CD8-positive, alpha-beta T cell (primary cell): ENCODE measurements at regions of chr1 and their contacts with region 1.

Region 1: GRCh38 chr1:165597883-165598675 is 33.0 kb upstream of the MGST3 start:
- DNase-seq: peak; percentile 77 to 95 (median 89)
- ATAC-seq: peak; percentile 94
- H3K4me3 ChIP-seq: peak overlapping the region; percentile 60 to 63
- H3K4me3 Mint-ChIP-seq: peak overlapping the region; percentile 89
- H3K27ac ChIP-seq: peak overlapping the region; percentile 24 to 49
- H3K27ac Mint-ChIP-seq: peak overlapping the region; percentile 50
- H3K4me1 ChIP-seq: peaks cover 12% of the 10 kb centered on the region
- H3K4me1 Mint-ChIP-seq: peaks cover 19% of the 10 kb centered on the region
- H3K27me3 ChIP-seq: peaks cover 0 to 3% of the 10 kb centered on the region in 2 experiments
- H3K27me3 Mint-ChIP-seq: peaks cover 31% of the 10 kb centered on the region
- CTCF ChIP-seq: no peak

Region 2: DNA sequence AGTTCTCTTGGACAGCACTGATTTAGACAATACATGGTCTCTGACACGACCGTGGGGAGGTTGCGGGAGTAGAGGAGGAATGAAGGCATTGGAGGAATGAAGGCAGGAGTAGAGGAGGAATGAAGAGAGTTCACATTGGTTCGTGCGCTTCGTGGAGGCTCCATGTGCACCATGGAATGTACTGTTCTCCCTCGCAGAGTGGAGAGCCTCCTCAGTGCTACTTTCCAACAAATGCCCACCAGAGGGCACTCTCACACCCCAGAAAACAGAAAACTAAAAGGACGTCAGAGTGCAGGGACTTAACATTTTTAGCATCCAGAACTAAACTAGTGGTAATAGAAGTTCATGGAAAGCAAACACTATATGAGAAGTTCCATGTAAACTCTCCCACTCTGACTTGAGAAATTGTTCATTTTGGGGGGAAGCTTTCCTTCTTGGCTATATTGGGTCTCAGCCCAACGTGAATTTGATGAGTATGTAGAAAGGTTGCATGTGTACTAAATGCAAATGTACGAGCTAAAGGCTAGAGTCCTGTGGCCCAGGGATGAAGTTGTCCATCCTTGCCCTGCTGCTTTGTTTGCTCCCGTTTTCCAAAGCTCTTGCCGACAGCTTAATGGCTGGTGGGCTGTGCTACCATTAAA is 453.2 kb before region 1 on chr1:
- CTCF ChIA-PET with region 1: no interaction called
- POLR2A ChIA-PET with region 1: no interaction called
- intact Hi-C with region 1: loop called in 1 of 2 experiments (anchors 2 kb)
- DNase-seq: peak in 4 of 9 experiments; percentile 5 to 17 (median 9)
- ATAC-seq: no peak
- H3K4me3 ChIP-seq: no peak overlapping the region
- H3K4me3 Mint-ChIP-seq: no peak overlapping the region
- H3K27ac ChIP-seq: no peak overlapping the region
- H3K27ac Mint-ChIP-seq: no peak overlapping the region
- H3K4me1 ChIP-seq: no peaks in the 10 kb centered on the region
- H3K4me1 Mint-ChIP-seq: peaks cover 3% of the 10 kb centered on the region
- H3K27me3 ChIP-seq: no peaks in the 10 kb centered on the region
- H3K27me3 Mint-ChIP-seq: peaks cover 5% of the 10 kb centered on the region
- CTCF ChIP-seq: peak; percentile 12

Region 3: GRCh38 chr1:165383067-165383466 is 215.0 kb before region 1 on chr1:
- CTCF ChIA-PET with region 1: interaction called, 25 read pairs
- POLR2A ChIA-PET with region 1: no interaction called
- intact Hi-C with region 1: no loop called
- DNase-seq: no peak
- ATAC-seq: no peak
- H3K4me3 ChIP-seq: no peak overlapping the region
- H3K4me3 Mint-ChIP-seq: no peak overlapping the region
- H3K27ac ChIP-seq: no peak overlapping the region
- H3K27ac Mint-ChIP-seq: no peak overlapping the region
- H3K4me1 ChIP-seq: no peaks in the 10 kb centered on the region
- H3K4me1 Mint-ChIP-seq: no peaks in the 10 kb centered on the region
- H3K27me3 ChIP-seq: no peaks in the 10 kb centered on the region
- H3K27me3 Mint-ChIP-seq: peaks cover 55% of the 10 kb centered on the region
- CTCF ChIP-seq: no peak

Region 4: GRCh38 chr1:165551469-165551868 is 46.6 kb before region 1 on chr1:
- CTCF ChIA-PET with region 1: no interaction called
- POLR2A ChIA-PET with region 1: no interaction called
- intact Hi-C with region 1: no loop called
- DNase-seq: no peak
- ATAC-seq: no peak
- H3K4me3 ChIP-seq: no peak overlapping the region
- H3K4me3 Mint-ChIP-seq: no peak overlapping the region
- H3K27ac ChIP-seq: no peak overlapping the region
- H3K27ac Mint-ChIP-seq: no peak overlapping the region
- H3K4me1 ChIP-seq: no peaks in the 10 kb centered on the region
- H3K4me1 Mint-ChIP-seq: no peaks in the 10 kb centered on the region
- H3K27me3 ChIP-seq: no peaks in the 10 kb centered on the region
- H3K27me3 Mint-ChIP-seq: peaks cover 34% of the 10 kb centered on the region
- CTCF ChIP-seq: no peak

Region 5: GRCh38 chr1:165580941-165581871 is 16.9 kb before region 1 on chr1:
- CTCF ChIA-PET with region 1: interaction called, 23 read pairs
- POLR2A ChIA-PET with region 1: no interaction called
- intact Hi-C with region 1: no loop called
- DNase-seq: no peak
- ATAC-seq: no peak
- H3K4me3 ChIP-seq: no peak overlapping the region
- H3K4me3 Mint-ChIP-seq: no peak overlapping the region
- H3K27ac ChIP-seq: no peak overlapping the region
- H3K27ac Mint-ChIP-seq: no peak overlapping the region
- H3K4me1 ChIP-seq: no peaks in the 10 kb centered on the region
- H3K4me1 Mint-ChIP-seq: no peaks in the 10 kb centered on the region
- H3K27me3 ChIP-seq: no peaks in the 10 kb centered on the region
- H3K27me3 Mint-ChIP-seq: peaks cover 23% of the 10 kb centered on the region
- CTCF ChIP-seq: no peak

Region 6: GRCh38 chr1:165697881-165698760 is 100.0 kb after region 1 on chr1 and contains the start of gene ALDH9A1:
- CTCF ChIA-PET with region 1: interaction called, 10 read pairs
- POLR2A ChIA-PET with region 1: interaction called, 3 read pairs
- intact Hi-C with region 1: loop called in 1 of 2 experiments (anchors 1 kb)
- DNase-seq: peak; percentile 74 to 90 (median 82)
- ATAC-seq: peak; percentile 87
- H3K4me3 ChIP-seq: peak within 1 kb of the TSS; percentile 65 to 87
- H3K4me3 Mint-ChIP-seq: peak within 1 kb of the TSS; percentile 98
- H3K27ac ChIP-seq: peak within 1 kb of the TSS; percentile 80 to 91
- H3K27ac Mint-ChIP-seq: peak within 1 kb of the TSS; percentile 95
- H3K4me1 ChIP-seq: peaks cover 25% of the 10 kb centered on the region
- H3K4me1 Mint-ChIP-seq: peaks cover 39% of the 10 kb centered on the region
- H3K27me3 ChIP-seq: peaks cover 0 to under 1% of the 10 kb centered on the region in 2 experiments
- H3K27me3 Mint-ChIP-seq: peaks cover 2% of the 10 kb centered on the region
- CTCF ChIP-seq: no peak
- total RNA-seq, gene ALDH9A1: 18.7 to 22.0 TPM

Region 7: DNA sequence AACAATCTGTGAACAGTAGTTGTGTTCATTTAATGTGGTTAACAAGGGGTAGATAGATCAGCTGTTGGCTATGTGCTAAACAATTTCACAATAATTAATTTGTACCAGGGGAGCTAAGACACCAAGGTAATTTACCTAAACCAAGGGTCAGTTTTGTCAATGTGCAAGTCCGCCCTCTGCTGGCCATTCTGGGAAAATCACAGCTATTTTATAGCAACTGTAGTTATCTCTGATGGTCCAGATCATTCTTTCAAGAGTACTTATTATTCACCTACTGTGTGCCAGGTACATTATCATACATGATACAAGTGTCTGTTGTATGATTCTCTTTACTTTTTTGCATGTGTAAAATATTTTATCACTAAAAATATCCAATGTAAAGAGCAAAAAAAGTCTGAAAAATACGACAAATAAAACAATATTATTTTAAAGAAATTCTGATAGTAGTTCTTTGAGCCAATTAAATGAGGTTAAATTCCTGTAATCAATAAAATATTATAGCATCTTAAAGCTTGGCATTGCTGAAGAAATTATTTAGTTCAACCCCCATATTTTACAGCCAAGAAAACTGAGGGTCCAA is 881.1 kb after region 1 on chr1:
- CTCF ChIA-PET with region 1: interaction called, 5 read pairs
- POLR2A ChIA-PET with region 1: no interaction called
- intact Hi-C with region 1: loop called (anchors 1 to 10 kb)
- DNase-seq: peak in 8 of 9 experiments; percentile 4 to 62 (median 38)
- ATAC-seq: peak; percentile 34
- H3K4me3 ChIP-seq: no peak overlapping the region
- H3K4me3 Mint-ChIP-seq: no peak overlapping the region
- H3K27ac ChIP-seq: no peak overlapping the region
- H3K27ac Mint-ChIP-seq: no peak overlapping the region
- H3K4me1 ChIP-seq: no peaks in the 10 kb centered on the region
- H3K4me1 Mint-ChIP-seq: no peaks in the 10 kb centered on the region
- H3K27me3 ChIP-seq: no peaks in the 10 kb centered on the region
- H3K27me3 Mint-ChIP-seq: no peaks in the 10 kb centered on the region
- CTCF ChIP-seq: peak; percentile 86